ENCODE measurements at regions of chr19 and their contacts with region 1.

Region 1: DNA sequence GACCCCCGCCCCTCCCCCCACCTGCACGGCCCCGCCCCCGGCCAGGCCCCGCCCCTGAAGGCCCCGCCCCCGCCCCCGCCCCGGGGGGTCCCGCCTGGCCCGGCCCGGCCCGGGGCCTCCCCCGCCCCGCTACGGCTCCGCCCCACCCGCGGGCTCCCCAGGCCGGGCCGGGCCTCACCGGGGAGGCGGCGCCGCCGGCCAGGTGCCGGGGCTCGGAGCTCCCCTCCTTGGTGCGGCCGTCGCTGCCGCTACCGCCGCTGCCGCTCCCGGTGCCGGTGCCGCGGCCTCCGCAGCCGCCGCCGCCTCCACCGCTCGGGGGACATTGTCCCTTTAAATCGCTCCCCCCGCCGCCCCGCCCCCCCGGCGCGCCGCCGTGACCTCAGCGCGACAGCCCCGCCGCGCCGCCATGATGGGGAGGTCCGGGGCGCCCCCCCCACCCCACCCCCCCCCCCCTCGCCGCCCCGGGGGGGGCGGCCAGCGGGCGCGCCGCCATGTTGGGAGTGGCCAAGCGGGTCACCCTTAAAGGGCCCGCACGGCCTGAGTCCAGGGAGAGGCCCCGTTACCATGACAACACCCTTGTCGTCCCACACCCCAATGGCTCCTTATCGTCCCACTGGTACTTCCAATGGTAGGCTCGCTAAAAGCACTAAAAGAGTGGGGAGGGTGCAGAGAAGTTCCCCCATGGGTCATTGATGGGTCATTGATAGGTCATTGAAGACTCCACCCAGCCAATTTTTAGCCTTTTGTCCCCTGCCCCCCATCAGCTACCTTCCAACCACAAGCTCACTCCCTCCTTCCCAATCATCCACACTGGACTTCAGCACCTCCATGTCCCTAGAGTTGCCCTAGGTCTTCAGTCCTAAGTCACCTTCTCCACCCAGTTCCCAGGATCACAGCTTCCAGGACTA is at the start of gene WIZ:
- DNase-seq: peak; percentile 89 to 92
- ATAC-seq: peak in 6 of 8 donors; percentile 8 to 42 (median 24)
- H3K4me3 ChIP-seq: peak within 1 kb of the TSS; percentile 62 to 97 (median 77)
- H3K27ac ChIP-seq: peak within 1 kb of the TSS; percentile 78 to 93 (median 86)
- H3K4me1 ChIP-seq: peaks cover 12 to 44% (median 34%) of the 10 kb centered on the region in 9 donors
- H3K27me3 ChIP-seq: peaks cover 0 to 13% (median 6%) of the 10 kb centered on the region in 7 donors
- CTCF ChIP-seq: no peak
- total RNA-seq, gene WIZ: 19.5 to 34.3 (median 21.3) TPM

Region 2: GRCh38 chr19:15101479-15102082 is 348.3 kb before region 1 on chr19:
- intact Hi-C with region 1: loop called in 1 of 10 experiments (anchors 10 kb)
- DNase-seq: no peak
- ATAC-seq: peak; percentile 41 to 79 (median 62)
- H3K4me3 ChIP-seq: no peak overlapping the region
- H3K27ac ChIP-seq: peak overlapping the region in 2 of 10 donors; percentile 34 to 44
- H3K4me1 ChIP-seq: peaks cover 0 to 11% (median 0%) of the 10 kb centered on the region in 9 donors
- H3K27me3 ChIP-seq: peaks cover 0 to 8% (median 0%) of the 10 kb centered on the region in 7 donors
- CTCF ChIP-seq: peak; percentile 46 to 77 (median 75)

Region 3: GRCh38 chr19:15418588-15419412 is 31.1 kb before region 1 on chr19 and contains the start of gene AKAP8L:
- intact Hi-C with region 1: loop called in 2 of 10 experiments (anchors 1 to 5 kb)
- DNase-seq: peak; percentile 97 to 100
- ATAC-seq: peak; percentile 95 to 98 (median 97)
- H3K4me3 ChIP-seq: peak within 1 kb of the TSS; percentile 69 to 99 (median 92)
- H3K27ac ChIP-seq: peak within 1 kb of the TSS; percentile 42 to 93 (median 90)
- H3K4me1 ChIP-seq: peaks cover 4 to 70% (median 36%) of the 10 kb centered on the region in 9 donors
- H3K27me3 ChIP-seq: no peaks in the 10 kb centered on the region
- CTCF ChIP-seq: peak; percentile 35 to 84 (median 70)
- total RNA-seq, gene AKAP8L: 45.2 to 101 (median 63.1) TPM